ENCODE measurements at regions of chr21 and their contacts with region 1.

Region 1: DNA sequence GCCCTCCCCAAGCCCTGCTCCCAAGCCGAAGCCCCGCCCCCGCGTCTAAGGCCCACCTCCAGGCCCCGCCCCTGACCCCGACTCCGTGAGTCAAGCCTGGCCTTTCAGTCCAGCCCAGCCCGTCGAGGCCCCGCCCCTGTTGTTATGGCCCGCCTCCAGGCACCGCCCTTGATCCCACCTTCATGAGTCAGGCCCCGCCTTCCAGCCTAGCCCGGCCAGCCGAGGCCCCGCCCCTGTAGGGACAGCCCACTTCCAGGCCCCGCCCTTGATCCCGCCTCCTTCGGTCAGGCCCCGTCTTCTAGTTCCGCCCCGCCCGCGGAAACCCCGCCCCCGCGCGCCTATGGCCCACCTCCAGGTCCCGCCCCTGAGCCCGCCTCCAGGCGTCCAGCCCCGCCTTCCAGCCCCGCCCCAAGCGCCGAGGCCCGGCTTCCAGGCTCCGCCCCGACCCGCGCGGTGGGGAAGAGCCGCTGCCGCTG is 247 bp upstream of the DOP1B start:
- H3K4me3 ChIP-seq: peak overlapping the region; percentile 73
- H3K27ac ChIP-seq: peak overlapping the region; percentile 73; the same call in 1 of the 2 replicates
- H3K4me1 ChIP-seq: no peaks in the 10 kb centered on the region
- CTCF ChIP-seq: no peak

Region 2: DNA sequence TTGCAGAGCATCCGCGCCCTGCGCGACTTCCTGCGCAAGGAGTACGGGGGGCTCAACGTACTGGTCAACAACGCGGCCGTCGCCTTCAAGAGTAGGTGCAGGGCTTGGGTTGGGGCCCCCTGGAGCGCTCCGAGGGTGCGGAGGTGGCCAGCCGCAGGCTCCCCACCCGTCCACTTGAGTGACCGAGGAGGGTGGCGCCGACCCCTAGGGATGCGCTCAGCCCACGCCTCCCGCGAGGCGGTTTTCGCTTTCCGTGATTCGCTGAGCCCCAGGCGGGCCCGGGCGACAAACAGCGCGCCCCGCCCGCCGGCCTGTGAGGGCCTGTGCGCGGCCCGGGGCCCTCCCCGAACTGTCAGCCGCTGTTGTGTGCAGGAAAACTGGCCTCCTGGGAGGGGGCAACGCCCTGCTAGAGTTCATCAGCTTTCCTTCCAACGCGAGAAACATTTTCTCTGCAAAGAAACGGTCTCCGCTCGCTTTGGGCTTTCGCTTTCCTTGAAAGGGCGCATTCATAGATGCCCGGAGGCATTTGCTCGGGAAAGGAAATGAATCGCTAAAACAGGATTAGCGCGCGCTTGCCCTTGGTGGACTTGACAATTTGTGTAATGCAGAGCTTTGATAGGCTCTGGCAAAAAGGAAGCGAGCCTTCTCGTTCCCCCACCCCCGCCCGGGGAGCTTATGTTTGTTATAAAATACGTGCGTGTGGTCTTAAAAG is 20.8 kb before region 1 on chr21:
- CTCF ChIA-PET with region 1: interaction called, 38 read pairs
- POLR2A ChIA-PET with region 1: interaction called, 11 read pairs
- H3K4me3 ChIP-seq: peak overlapping the region; percentile 54
- H3K27ac ChIP-seq: peak overlapping the region; percentile 71
- H3K4me1 ChIP-seq: peaks cover 6% of the 10 kb centered on the region
- CTCF ChIP-seq: no peak

Region 3: DNA sequence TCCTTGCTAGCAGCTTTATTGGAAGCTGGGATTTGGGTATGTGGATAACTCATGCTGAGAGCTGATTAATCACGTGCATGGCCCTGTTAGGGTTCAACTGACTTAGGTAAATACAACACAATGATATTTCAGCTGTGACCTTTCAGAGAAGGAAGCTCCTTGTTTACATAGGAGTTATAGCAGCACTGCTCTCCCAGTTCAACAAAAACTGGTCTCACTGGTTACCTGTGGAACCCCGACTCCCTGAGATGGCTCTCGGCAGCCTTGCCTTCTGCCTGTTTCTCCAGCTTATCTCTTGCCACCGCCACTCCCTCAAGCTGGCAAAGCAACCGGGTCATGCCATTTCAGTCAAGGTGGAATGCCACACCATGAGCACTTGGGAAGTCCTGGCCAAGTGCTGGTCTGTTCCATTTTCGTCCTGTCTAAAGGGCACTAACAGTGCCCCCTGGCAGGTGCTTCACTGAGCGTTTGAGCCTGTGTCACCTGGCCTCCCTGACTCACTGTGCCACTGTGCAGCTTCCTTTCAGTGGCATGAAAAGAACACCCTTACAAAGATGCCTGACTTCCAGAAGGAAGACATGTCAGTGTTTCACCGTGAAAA is 31.8 kb after region 1 on chr21:
- CTCF ChIA-PET with region 1: interaction called, 5 read pairs
- POLR2A ChIA-PET with region 1: interaction called, 10 read pairs
- H3K4me3 ChIP-seq: no peak overlapping the region
- H3K27ac ChIP-seq: no peak overlapping the region
- H3K4me1 ChIP-seq: peaks cover 11% of the 10 kb centered on the region
- CTCF ChIP-seq: no peak

Measured in HEK293 (cell line).